Posterior vena cava (tissue), 2 donors: ENCODE measurements at regions of chr6 and their contacts with region 1.

Region 1: DNA sequence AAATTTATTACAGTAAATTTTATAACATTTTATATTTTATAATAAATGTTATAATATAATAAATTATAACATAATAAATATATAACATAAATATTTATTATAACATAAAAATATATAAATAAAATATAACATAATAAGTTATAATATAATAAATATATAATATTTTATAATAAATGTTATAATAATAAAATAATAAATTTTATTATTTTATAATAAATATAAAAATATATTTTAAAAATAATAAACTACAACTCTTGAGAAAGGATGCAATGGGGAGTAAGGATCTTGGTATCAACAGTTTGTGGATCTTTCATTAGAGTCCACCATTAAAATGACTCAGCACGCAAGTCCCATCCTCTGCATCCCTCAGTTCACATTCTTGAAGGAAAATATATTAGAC is 312.6 kb downstream of the MEI4 start:
- DNase-seq: no peak

Region 2: DNA sequence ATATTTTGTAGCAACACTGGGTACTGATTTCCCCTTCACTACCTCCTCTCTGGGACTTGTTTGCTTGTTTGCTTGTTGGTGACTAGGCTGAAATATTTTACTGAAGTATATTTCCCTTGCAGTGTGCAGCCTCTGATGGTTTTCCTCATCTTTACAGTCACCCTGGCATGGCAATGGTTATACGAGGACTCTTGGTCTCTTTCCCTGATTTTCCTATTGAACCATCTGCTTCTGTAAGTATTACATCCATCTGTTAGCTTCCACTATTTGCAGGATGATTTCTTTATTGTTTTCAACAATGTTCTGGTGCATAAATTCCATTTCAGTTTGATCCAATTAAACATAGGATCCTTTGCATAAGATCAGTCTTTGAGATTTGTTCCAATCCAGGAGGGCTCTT is 152.5 kb after region 1 on chr6:
- intact Hi-C with region 1: loop called in 1 of 2 experiments (anchors 2 kb)
- DNase-seq: no peak